Activated CD8-positive, alpha-beta T cell treated with anti-CD3 and anti-CD28 coated beads, Interleukin-2, amount 10 ng/mL, durations not matched to agents 7 days and 5 days (primary cell): ENCODE measurements at regions of chr19 and their contacts with region 1.

Region 1: DNA sequence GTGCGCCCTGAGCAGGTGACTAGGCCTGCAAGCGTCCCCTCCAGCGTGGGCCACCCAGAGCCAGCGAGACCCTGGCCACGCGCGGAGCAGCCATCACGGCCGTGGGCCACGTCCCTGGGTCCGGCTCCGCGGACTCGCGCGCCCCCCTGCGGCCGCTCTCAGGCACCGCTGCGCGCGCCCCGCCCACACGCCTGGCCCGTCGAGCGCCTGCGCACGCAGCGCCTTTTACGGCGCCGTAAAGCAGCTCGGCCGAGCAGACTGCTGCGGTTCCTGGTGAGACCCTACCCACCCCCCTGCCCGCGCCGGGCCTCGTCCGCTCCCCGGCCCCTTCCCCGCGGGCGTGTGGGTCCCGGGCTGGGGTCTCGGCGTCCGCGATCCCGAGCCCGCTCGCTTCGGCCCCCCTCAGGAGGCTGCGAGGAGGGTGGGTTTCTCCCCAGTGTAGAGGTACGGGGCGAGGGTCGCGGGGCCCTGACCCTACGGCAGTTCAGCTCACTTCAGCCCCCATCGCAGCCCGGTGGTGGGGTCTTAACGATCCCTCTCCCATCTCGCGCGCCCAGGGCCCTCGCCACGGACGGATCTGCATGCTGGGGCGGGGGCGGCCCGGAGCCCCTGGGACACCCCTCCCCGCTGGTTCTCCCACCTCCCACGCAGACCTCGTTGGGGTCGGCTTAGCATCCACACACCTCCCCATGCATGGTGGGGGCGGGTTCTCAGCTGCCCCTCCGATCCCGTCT is at the start of gene TRAPPC5:
- DNase-seq: peak; percentile 88
- ATAC-seq: peak; percentile 80
- H3K4me3 Mint-ChIP-seq: peak within 1 kb of the TSS; percentile 87
- H3K27ac Mint-ChIP-seq: peak within 1 kb of the TSS; percentile 93
- H3K4me1 Mint-ChIP-seq: peaks cover 54% of the 10 kb centered on the region
- H3K27me3 Mint-ChIP-seq: peaks cover 17% of the 10 kb centered on the region
- total RNA-seq, gene TRAPPC5: 92.8 to 95.1 TPM

Region 2: DNA sequence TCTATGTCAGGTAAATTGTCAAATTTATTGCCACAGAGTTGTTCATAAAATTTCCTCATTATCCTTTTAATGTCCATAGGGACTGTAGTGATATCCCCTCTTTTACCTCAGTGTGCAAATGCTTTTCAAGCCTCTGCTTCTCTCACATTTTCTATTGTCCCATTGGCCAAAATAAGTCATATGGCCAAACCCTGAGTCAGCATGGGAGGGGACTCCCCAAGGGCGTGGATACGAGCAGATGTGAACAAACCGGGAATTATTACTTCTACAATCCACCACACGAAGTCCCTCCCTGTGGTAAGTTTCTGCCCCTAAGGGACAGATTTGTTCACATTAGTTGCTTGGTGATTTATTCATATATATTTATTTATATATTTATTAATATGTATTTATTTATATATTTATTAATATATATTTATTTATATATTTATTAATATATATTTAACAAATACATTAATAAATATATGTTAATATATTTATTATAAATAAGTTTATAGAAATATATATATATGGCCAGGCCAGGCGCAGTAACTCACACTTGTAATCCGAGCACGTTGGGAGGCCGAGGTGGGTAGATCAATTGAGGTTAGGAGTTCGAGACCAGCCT is 105.2 kb before region 1 on chr19:
- CTCF ChIA-PET with region 1: interaction called, 48 read pairs
- POLR2A ChIA-PET with region 1: no interaction called
- DNase-seq: no peak
- ATAC-seq: no peak
- H3K4me3 Mint-ChIP-seq: no peak overlapping the region
- H3K27ac Mint-ChIP-seq: no peak overlapping the region
- H3K4me1 Mint-ChIP-seq: no peaks in the 10 kb centered on the region
- H3K27me3 Mint-ChIP-seq: peaks cover 4% of the 10 kb centered on the region

Region 3: GRCh38 chr19:7652061-7652641 is 28.6 kb before region 1 on chr19:
- CTCF ChIA-PET with region 1: interaction called, 100 read pairs
- POLR2A ChIA-PET with region 1: no interaction called
- DNase-seq: peak; percentile 91
- ATAC-seq: peak; percentile 90
- H3K4me3 Mint-ChIP-seq: peak overlapping the region; percentile 58
- H3K27ac Mint-ChIP-seq: peak overlapping the region; percentile 66
- H3K4me1 Mint-ChIP-seq: peaks cover 22% of the 10 kb centered on the region
- H3K27me3 Mint-ChIP-seq: no peaks in the 10 kb centered on the region

Region 4: DNA sequence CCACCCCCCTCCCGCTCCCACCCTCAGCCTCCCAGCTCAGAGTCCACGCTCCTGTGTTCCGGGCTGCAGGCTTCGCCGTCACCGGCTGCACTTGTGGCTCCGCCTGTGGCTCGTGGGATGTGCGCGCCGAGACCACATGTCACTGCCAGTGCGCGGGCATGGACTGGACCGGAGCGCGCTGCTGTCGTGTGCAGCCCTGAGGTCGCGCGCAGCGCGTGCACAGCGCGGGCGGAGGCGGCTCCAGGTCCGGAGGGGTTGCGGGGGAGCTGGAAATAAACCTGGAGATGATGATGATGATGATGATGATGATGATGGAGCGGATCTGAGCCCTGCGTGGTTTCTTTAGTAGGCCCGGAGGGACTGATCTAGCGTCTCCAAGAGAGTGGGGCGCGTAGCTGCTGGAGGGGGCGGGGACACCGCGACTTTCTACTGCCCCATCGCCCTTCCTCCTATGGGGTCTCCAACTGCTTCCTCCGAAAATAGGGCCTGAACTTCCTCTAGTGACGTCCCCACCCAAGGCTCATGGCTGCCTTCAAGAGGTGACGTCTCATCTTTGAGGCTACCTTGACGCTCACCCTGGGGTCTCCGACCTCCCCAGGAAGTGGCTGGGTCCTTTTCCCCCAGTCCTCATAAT is 10.5 kb before region 1 on chr19:
- CTCF ChIA-PET with region 1: interaction called, 33 read pairs
- POLR2A ChIA-PET with region 1: no interaction called
- DNase-seq: peak; percentile 62
- ATAC-seq: peak; percentile 55
- H3K4me3 Mint-ChIP-seq: peak overlapping the region; percentile 65
- H3K27ac Mint-ChIP-seq: peak overlapping the region; percentile 52
- H3K4me1 Mint-ChIP-seq: peaks cover 32% of the 10 kb centered on the region
- H3K27me3 Mint-ChIP-seq: peaks cover 22% of the 10 kb centered on the region

Region 5: GRCh38 chr19:7799640-7800355 is 119.0 kb after region 1 on chr19:
- CTCF ChIA-PET with region 1: interaction called, 50 read pairs
- POLR2A ChIA-PET with region 1: no interaction called
- DNase-seq: peak; percentile 67
- ATAC-seq: no peak
- H3K4me3 Mint-ChIP-seq: no peak overlapping the region
- H3K27ac Mint-ChIP-seq: no peak overlapping the region
- H3K4me1 Mint-ChIP-seq: peaks cover 3% of the 10 kb centered on the region
- H3K27me3 Mint-ChIP-seq: peaks cover 45% of the 10 kb centered on the region

Region 6: GRCh38 chr19:7868676-7869452 is 188.1 kb after region 1 on chr19:
- CTCF ChIA-PET with region 1: interaction called, 10 read pairs
- POLR2A ChIA-PET with region 1: no interaction called
- DNase-seq: peak; percentile 83
- ATAC-seq: peak; percentile 80
- H3K4me3 Mint-ChIP-seq: peak overlapping the region; percentile 65
- H3K27ac Mint-ChIP-seq: peak overlapping the region; percentile 74
- H3K4me1 Mint-ChIP-seq: peaks cover 47% of the 10 kb centered on the region
- H3K27me3 Mint-ChIP-seq: peaks cover 47% of the 10 kb centered on the region